Esophagus squamous epithelium (tissue), 5 donors: ENCODE measurements at regions of chr3 and their contacts with region 1.

Region 1: GRCh38 chr3:14791343-14791945 is 27.3 kb upstream of the FGD5 start:
- DNase-seq: no peak
- H3K4me3 ChIP-seq: no peak overlapping the region
- H3K27ac ChIP-seq: no peak overlapping the region
- H3K4me1 ChIP-seq: peaks cover 0 to 20% (median 20%) of the 10 kb centered on the region in 3 donors
- H3K27me3 ChIP-seq: peaks cover 0 to 25% (median 2%) of the 10 kb centered on the region in 4 donors
- CTCF ChIP-seq: peak; percentile 32 to 71 (median 58)
- POLR2A ChIP-seq: no peak

Region 2: DNA sequence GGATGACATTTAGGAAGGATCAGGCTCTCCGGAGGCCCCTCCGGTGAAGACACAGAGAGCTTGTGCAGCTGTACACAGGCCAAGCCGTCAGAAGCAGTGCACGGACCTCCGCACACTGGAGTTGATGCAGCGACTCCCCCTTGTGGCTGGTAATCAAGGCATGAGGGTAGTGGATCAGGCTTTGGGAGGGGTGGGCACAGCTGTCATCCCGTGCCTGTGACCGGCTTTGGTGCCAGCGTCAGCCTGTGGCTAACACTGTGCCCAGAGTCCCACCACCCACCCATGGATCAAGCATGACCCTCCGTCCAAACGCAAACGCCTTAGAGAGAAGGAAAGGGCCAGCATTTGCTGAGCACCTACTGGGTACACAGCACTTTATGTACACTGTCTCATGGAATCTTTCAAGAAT is 243.1 kb before region 1 on chr3:
- intact Hi-C with region 1: no loop called
- DNase-seq: no peak
- H3K4me3 ChIP-seq: no peak overlapping the region
- H3K27ac ChIP-seq: no peak overlapping the region
- H3K4me1 ChIP-seq: peaks cover 0 to 14% (median 0%) of the 10 kb centered on the region in 3 donors
- H3K27me3 ChIP-seq: peaks cover 0 to 56% (median 0%) of the 10 kb centered on the region in 4 donors
- CTCF ChIP-seq: peak; percentile 19 to 84 (median 60)
- POLR2A ChIP-seq: no peak

Region 3: DNA sequence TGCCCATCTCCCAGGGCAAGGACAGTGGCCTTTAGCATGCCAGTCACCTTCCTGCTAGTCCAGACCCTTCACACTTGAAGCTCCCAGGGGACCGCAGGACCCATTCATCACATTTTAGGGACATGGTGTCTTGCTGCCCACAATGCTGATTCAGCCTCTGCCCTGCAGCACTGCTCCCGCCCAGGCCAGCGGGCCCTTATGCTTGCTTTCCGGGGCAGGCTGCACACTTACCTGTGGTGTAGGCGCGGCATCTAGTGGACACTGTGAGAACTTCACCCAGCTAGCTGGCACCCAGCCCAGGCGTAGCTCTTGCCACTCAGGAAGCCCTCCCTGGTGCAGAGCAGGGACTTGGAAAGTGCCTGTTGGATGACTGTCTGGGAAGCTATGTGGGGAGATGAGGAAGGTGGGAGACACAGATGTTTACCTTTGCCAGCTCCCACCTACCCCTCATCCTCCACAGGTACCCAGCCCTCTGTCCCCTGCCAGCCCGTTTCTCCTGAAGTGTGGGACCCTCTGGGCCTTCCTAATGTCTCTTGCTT is 129.7 kb after region 1 on chr3:
- intact Hi-C with region 1: loop called (anchors 5 kb)
- DNase-seq: peak; percentile 55
- H3K4me3 ChIP-seq: no peak overlapping the region
- H3K27ac ChIP-seq: peak overlapping the region in 1 of 4 donors; percentile 26
- H3K4me1 ChIP-seq: peaks cover 4 to 12% (median 5%) of the 10 kb centered on the region in 3 donors
- H3K27me3 ChIP-seq: peaks cover 0 to 6% (median 0%) of the 10 kb centered on the region in 4 donors
- CTCF ChIP-seq: peak; percentile 91 to 99 (median 98)
- POLR2A ChIP-seq: no peak

Region 4: GRCh38 chr3:15098503-15099363 is 307.3 kb after region 1 on chr3 and contains the start of gene RBSN:
- intact Hi-C with region 1: no loop called
- DNase-seq: peak; percentile 80
- H3K4me3 ChIP-seq: peak within 1 kb of the TSS; percentile 89 to 99 (median 95)
- H3K27ac ChIP-seq: peak within 1 kb of the TSS; percentile 88 to 95 (median 93)
- H3K4me1 ChIP-seq: peaks cover 15 to 50% (median 26%) of the 10 kb centered on the region in 3 donors
- H3K27me3 ChIP-seq: no peaks in the 10 kb centered on the region
- CTCF ChIP-seq: peak in 1 of 6 experiments; percentile 31
- POLR2A ChIP-seq: peak in 3 of 4 donors; percentile 37 to 67 (median 66)
- total RNA-seq, gene RBSN: 16.0 to 25.0 (median 18.2) TPM